Motor neuron (in vitro differentiated cells): ENCODE measurements at regions of chr3 and their contacts with region 1.

Region 1: DNA sequence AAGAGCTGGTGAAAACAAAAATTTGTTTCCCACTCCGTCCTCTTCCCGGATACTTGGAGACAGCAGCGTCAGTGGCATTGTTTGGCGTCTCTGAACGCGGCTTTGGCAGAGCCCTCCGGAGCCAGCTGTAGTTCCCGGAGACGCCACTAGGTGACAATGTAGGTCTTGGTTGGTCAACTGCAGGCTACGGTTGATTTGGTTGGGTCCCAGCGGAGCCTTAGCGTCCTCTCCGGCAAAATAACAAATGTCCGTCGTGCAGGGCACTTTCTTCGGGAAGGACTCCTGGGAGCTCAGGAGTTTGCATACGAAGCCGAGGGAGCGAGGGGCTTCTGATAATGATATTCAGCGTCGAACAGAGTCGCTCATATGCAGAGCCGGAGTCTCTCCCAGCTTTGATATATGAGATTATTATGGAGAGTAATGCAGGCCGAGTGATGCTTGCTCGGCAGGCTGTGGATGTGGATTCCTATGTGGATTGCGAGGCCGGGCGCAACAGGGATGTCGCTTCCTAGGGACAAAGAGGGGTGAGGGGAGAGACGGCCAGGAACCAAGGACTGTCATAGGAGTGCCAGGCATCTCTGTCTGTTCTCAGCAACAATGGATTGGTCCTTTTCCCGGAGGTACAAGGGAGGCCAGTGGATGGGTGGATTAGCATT is 74.8 kb downstream of the IL20RB start:
- ATAC-seq: peak; percentile 91 to 97 (median 92)
- H3K4me3 ChIP-seq: peak overlapping the region; percentile 15 to 45 (median 25)
- H3K27ac ChIP-seq: peak overlapping the region in 1 of 2 donors; percentile 34
- H3K4me1 ChIP-seq: no peaks in the 10 kb centered on the region

Region 2: DNA sequence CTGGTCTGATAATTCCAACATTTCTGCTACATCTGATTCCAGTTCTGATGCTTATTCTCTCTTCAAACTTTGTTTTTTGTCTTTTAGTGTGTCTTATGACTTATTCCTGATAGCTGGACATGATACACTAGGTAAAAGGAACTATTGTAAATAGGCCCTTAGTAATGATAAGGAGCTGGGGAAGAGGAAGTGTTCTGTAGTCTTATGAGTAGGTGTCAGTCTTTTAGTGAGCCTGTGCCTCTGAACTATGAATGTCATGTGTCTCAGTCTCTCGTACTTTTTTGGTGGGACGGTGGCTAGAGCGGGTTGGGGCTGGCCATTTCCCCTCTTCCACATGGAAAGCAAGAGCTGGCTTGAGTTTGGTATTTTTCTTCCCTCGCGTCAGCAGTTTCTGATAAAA is 741.3 kb before region 1 on chr3:
- in situ Hi-C with region 1: no loop called
- ATAC-seq: no peak
- H3K4me3 ChIP-seq: no peak overlapping the region
- H3K27ac ChIP-seq: no peak overlapping the region
- H3K4me1 ChIP-seq: no peaks in the 10 kb centered on the region

Region 3: GRCh38 chr3:137191133-137191923 is 158.7 kb after region 1 on chr3:
- in situ Hi-C with region 1: loop called in 1 of 9 experiments (anchors 25 kb)
- ATAC-seq: no peak
- H3K4me3 ChIP-seq: no peak overlapping the region
- H3K27ac ChIP-seq: no peak overlapping the region
- H3K4me1 ChIP-seq: no peaks in the 10 kb centered on the region

Region 4: DNA sequence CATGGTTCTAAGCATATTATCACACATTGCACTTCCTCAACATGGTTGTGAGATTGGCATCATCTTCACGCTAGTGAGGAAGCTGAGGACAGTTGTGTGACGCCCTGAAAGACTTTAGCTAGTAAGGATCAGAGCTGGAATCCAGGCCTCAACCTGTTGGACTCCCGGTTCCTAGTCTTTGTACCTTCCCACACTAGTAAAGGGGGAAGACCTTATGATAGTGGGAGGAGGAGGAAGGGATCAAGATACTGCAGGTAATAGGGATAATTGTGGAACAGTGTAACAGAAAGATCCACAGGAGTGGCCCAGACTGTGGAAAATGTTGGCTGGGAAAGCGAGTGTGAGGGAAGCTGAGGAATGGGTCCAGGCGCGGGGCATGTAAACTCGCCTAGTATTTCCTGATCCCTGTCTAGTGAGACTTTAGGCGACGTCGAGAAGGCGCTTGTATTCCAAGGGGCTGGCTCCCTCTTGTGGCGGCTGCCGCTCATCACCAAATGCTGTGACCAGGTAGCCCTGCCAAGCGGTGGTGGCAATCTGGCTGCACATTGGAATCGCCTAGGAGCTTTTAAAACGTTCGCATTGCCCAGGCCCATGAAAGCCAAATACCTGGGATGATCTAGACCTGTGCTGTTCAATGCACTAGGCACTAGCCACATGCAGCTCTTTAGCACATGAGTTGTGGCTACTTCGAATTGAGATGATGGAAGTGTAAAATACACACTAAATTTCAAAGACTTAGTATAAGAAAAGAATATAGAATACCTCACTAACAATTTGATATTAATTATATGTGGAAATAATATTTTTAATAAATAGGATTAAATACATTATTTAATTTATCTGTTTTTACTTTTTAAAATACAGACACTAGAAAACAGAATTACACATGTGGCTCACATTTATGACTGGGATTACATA is 938.6 kb after region 1 on chr3:
- in situ Hi-C with region 1: loop called in 1 of 9 experiments (anchors 25 kb)
- ATAC-seq: peak; percentile 77 to 100 (median 92)
- H3K4me3 ChIP-seq: no peak overlapping the region
- H3K27ac ChIP-seq: no peak overlapping the region
- H3K4me1 ChIP-seq: no peaks in the 10 kb centered on the region